ENCODE measurements at regions of chr2 and their contacts with region 1.

Region 1: DNA sequence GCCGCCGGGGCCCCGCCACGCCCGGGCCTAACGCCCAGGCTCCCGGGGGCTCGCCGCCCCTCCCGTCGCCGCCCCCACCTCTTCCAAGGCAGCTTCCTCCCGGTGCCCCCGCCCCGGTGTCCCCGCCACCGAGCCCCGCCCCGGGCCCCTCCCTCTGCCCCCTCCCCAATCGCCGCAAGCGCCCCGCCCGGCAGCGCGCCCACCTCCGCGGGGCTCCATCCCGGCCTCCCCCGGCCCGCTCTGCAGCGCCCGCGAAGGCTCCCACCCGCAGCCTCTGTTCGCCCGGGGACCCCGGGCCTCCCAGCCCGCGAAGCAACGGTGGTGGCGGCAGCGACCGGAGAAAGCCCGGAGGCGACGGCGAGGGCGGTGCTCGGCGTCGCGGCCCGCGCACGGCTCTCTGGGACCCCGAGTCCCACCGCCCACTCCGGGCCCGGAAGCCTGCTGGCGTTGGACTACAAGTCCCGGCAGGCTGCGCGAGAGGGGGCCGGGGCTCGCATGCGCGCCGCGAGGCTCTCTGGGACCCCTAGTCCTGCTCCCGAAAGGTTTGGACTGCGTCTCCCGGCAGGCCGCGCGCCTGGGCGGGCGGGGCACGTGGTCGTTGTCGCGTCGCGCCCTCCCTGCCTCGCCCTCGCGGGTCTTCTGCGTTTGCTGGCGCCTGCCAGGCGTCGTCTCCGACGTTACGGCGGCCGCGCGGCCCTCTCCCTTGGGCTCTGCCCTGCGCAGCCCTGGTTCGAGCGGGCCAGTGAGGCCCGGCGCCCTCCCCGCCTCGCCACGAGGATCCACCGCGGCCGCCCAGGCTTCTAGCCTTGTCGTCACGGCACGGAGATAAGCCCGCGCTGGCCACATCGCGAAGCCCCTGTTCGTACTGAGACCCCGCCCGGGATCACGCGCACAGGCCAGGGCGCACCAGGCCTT is at the start of gene STK25:
- DNase-seq: peak; percentile 98
- H3K4me3 Mint-ChIP-seq: peak within 1 kb of the TSS; percentile 83
- H3K27ac Mint-ChIP-seq: peak within 1 kb of the TSS; percentile 81
- H3K4me1 Mint-ChIP-seq: peaks cover 8% of the 10 kb centered on the region
- H3K27me3 Mint-ChIP-seq: peaks cover 6% of the 10 kb centered on the region
- total RNA-seq, gene STK25: 125 and 133 TPM in 2 replicates

Region 2: DNA sequence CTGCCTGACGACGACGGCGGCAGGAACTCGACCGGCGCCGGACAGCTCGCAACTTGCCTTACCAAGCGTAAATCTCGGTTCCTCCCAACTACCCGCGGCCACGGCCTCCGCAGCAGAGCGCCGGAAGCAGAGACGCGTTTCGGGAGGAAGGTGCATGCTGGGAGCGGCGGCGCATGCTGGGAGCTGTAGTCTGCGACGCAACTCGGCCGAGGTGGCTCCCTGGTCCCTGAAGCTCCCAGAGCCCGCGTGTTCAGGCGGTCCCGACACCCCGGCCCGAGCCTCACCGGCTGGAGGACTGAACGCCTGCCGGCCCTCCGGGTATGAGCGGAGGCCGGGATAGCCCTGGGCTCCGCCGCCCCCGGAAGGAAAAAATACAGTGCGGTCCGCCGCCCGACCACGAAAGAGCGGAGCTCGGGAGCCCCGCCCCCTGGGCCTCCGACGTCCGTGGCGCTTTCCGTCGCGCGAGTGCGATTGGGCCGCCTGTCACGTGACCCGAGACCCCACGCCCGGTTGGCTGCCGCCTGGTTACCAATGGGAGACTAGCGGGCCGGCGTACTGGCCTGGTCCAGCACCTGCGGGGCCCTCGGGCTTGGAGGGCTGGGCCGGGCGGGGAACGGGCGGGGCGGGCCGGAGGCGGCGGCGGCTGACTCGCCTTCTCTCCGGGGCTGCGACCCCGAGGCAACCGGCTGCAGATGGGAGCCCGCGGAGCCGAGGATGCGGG is 922.1 kb before region 1 on chr2 and contains the start of gene CAPN10:
- intact Hi-C with region 1: loop called (anchors 1 kb)
- DNase-seq: peak; percentile 97
- H3K4me3 Mint-ChIP-seq: peak within 1 kb of the TSS; percentile 96
- H3K27ac Mint-ChIP-seq: peak within 1 kb of the TSS; percentile 93
- H3K4me1 Mint-ChIP-seq: peaks cover 38% of the 10 kb centered on the region
- H3K27me3 Mint-ChIP-seq: no peaks in the 10 kb centered on the region
- total RNA-seq, gene CAPN10: 49.8 and 55.4 TPM in 2 replicates

Region 3: GRCh38 chr2:241443486-241444223 is 64.8 kb before region 1 on chr2:
- intact Hi-C with region 1: loop called (anchors 2 kb)
- DNase-seq: peak; percentile 83
- H3K4me3 Mint-ChIP-seq: peak overlapping the region; percentile 55
- H3K27ac Mint-ChIP-seq: peak overlapping the region; percentile 93
- H3K4me1 Mint-ChIP-seq: peaks cover 32% of the 10 kb centered on the region
- H3K27me3 Mint-ChIP-seq: peaks cover 30% of the 10 kb centered on the region

Region 4: DNA sequence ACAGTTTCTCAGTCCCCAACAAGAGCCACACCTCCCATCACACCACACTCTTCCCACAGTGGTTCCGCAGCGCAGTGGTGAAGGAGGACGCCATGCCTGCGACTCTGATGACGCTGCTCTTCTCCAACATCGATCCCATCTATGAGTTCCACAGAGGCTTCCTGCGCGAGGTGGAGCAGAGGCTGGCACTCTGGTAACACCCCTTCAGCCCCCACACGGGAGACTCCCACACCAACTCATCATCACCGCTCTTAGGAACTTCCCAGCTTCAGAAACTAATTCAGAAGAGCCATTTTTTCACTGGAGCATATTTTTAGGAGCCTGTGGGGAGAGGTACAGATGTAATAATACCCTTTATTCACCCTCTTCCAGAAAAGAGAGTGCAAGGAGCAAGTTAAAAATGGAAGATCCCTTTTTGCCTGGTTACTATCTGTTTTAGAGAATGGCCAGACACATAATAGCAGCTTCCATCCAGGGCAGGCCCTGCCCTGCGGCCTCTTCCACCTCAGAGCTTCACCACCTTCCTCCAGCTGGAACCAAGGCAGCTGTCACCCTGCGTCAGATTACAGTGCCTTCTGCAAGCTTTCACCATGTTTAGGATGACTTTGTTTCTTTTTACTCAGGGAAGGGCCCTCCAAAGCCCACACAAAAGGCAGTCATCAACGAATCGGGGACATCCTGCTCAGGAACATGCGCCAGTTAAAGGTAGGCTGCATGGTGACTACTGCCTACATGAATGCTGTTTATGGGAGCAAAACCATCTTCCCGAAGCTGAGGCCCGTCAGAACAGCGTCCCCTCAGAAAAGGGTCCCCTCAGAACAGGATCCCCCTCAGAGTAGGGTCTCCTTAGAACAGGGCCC is 45.0 kb before region 1 on chr2:
- intact Hi-C with region 1: no loop called
- DNase-seq: no peak
- H3K4me3 Mint-ChIP-seq: no peak overlapping the region
- H3K27ac Mint-ChIP-seq: no peak overlapping the region
- H3K4me1 Mint-ChIP-seq: no peaks in the 10 kb centered on the region
- H3K27me3 Mint-ChIP-seq: peaks cover 1% of the 10 kb centered on the region

Region 5: GRCh38 chr2:241609859-241610793 is 101.6 kb after region 1 on chr2:
- intact Hi-C with region 1: loop called (anchors 1 kb)
- DNase-seq: peak; percentile 88
- H3K4me3 Mint-ChIP-seq: peak overlapping the region; percentile 78
- H3K27ac Mint-ChIP-seq: peak overlapping the region; percentile 83
- H3K4me1 Mint-ChIP-seq: peaks cover 18% of the 10 kb centered on the region
- H3K27me3 Mint-ChIP-seq: no peaks in the 10 kb centered on the region

Region 6: DNA sequence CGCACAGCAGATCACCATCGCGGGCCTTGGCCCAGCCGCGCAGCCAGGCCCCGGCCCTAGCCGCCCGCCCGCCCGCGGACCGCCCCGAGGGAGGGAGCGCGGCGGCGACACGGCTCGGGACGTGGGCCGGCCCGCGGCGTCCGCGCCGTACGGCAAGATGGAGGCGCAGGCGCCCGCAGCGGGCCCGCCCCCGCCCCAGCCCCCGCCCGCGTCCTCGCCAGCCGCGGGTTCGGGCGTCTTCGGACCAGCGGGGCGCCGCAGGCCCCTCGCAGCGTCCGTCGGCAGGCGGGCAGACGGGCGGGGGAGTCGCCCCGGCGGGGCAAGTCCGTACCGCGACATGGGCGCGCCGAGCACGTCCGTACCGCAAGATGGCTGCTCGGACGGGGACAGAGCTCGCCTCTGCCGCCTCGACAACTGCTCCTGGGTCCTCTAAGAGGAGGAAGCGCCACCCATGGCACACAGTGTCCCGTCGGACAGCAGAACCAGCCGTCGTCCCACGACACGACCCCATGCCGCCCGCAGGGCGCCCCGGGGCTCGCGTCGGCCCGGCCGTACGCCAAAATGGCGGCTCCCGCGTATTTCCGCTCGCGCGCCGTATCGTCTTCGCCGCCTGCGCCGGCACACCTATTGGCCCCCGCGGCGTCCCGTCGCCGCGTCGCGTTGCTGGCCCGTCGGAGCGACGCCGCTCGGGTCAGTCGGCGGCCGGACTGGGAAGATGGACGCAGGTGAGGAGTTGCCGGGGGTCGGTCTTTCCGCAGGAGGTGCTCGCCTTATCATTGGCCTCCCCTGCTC is 128.7 kb after region 1 on chr2 and contains the starts of genes ATG4B and THAP4:
- intact Hi-C with region 1: loop called (anchors 1 kb)
- DNase-seq: peak; percentile 78
- H3K4me3 Mint-ChIP-seq: peak within 1 kb of the TSS; percentile 93
- H3K27ac Mint-ChIP-seq: peak within 1 kb of the TSS; percentile 93
- H3K4me1 Mint-ChIP-seq: peaks cover 44% of the 10 kb centered on the region
- H3K27me3 Mint-ChIP-seq: no peaks in the 10 kb centered on the region
- total RNA-seq, gene ATG4B: 116 and 126 TPM in 2 replicates
- total RNA-seq, gene THAP4: 53.1 and 58.5 TPM in 2 replicates

Region 7: GRCh38 chr2:241734467-241735208 is 226.1 kb after region 1 on chr2 and contains the start of gene D2HGDH:
- intact Hi-C with region 1: loop called (anchors 1 kb)
- DNase-seq: peak; percentile 89
- H3K4me3 Mint-ChIP-seq: peak within 1 kb of the TSS; percentile 82
- H3K27ac Mint-ChIP-seq: no peak within 1 kb of the TSS
- H3K4me1 Mint-ChIP-seq: peaks cover 41% of the 10 kb centered on the region
- H3K27me3 Mint-ChIP-seq: peaks cover 3% of the 10 kb centered on the region
- total RNA-seq, gene D2HGDH: 27.1 and 28.7 TPM in 2 replicates